ENCODE measurements at regions of chr19 and their contacts with region 1.

Region 1: DNA sequence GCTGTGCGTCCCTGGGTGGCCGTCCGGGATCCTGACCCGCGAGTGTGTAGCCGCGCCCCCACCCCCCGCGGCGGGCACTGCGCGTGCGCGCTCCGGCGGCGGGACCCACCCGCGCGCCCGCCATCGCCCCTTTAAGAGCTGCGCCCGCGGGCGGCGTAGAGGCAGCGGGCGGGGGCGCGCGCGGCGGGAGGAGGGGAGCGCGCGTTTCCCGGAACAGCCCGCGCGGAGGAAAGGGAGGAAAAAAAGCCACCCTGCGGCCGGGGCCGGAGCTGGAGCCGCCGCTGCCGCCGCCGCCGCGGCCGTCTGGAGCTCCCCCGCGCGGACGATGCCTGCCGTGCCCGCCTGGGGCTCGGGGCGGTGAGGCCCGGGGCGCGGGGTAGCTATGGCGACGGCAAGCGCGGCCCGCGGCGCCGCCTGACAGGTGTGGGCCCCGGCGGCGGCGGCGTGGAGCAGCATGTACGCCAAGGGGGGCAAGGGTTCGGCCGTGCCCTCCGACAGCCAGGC is at the start of gene SSBP4:
- DNase-seq: no peak
- H3K4me3 ChIP-seq: peak within 1 kb of the TSS; percentile 71
- H3K27ac ChIP-seq: peak within 1 kb of the TSS; percentile 47
- H3K27me3 ChIP-seq: no peaks in the 10 kb centered on the region
- CTCF ChIP-seq: 0 out of 2 replicates have a peak, but pooled peaks have one; percentile 18
- polyA plus RNA-seq, gene SSBP4: 9.4 and 12.6 TPM in 2 replicates

Region 2: GRCh38 chr19:18349524-18350128 is 69.6 kb before region 1 on chr19:
- CTCF ChIA-PET with region 1: interaction called, 65 read pairs
- POLR2A ChIA-PET with region 1: no interaction called
- DNase-seq: no peak
- H3K4me3 ChIP-seq: no peak overlapping the region
- H3K27ac ChIP-seq: no peak overlapping the region
- H3K27me3 ChIP-seq: no peaks in the 10 kb centered on the region
- CTCF ChIP-seq: peak; percentile 86

Region 3: DNA sequence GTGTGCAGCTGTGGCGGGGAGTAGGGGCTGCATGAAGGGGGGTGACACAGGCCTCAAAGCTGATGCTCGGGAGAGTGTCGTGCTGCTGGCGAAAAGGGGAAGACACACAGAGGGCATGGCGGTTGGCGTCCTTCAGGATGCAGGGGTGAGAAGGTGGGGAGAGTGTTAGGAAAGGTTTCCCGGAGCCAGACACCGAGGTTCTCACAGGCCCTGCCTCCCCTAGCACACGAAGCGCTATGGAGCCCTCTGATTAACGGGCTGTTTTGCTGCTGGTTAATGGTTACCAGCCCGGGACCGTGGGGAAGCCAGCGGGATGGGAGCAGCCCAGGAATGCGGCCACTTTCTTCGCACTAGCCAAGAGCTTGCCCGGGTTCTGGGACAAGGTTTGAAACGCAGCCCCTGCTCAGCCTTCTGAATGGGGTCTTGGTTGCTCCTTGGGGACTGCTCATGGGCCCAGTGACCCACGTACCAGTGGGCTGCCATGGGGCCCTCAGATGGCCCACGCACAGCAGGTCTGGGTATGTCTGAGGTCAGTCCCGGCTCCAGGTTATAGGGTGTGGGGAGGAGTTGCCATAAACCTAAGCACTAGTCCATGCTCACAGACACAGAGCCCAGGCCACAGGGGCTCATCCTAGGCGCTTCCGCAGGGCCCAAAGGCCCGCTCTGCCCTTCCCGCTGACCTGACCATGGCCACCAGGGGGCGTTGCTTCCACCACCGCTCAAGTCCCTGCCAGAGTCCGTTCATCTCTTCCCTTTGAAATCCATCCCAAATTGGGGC is 50.0 kb after region 1 on chr19:
- CTCF ChIA-PET with region 1: no interaction called
- POLR2A ChIA-PET with region 1: no interaction called
- DNase-seq: no peak
- H3K4me3 ChIP-seq: no peak overlapping the region
- H3K27ac ChIP-seq: no peak overlapping the region
- H3K27me3 ChIP-seq: no peaks in the 10 kb centered on the region
- CTCF ChIP-seq: peak; percentile 78